Activated CD4-positive, alpha-beta T cell treated with anti-CD3 and anti-CD28 coated beads for 36 hours (primary cell): ENCODE measurements at regions of chr16 and their contacts with region 1.

Region 1: GRCh38 chr16:2155091-2156021 is at the start of gene TRAF7:
- DNase-seq: peak; percentile 98
- ATAC-seq: peak; percentile 95
- H3K4me3 Mint-ChIP-seq: peak within 1 kb of the TSS; percentile 89
- H3K27ac Mint-ChIP-seq: peak within 1 kb of the TSS; percentile 94
- H3K4me1 Mint-ChIP-seq: peaks cover 31% of the 10 kb centered on the region
- H3K27me3 Mint-ChIP-seq: no peaks in the 10 kb centered on the region
- total RNA-seq, gene TRAF7: 70.7 to 93.7 TPM

Region 2: GRCh38 chr16:1942810-1943726 is 212.3 kb before region 1 on chr16 and contains the start of gene MSRB1:
- CTCF ChIA-PET with region 1: no interaction called
- POLR2A ChIA-PET with region 1: interaction called, 5 read pairs
- intact Hi-C with region 1: loop called in 1 of 2 experiments (anchors 1 kb)
- DNase-seq: peak; percentile 100
- ATAC-seq: peak; percentile 97
- H3K4me3 Mint-ChIP-seq: peak within 1 kb of the TSS; percentile 80
- H3K27ac Mint-ChIP-seq: peak within 1 kb of the TSS; percentile 82
- H3K4me1 Mint-ChIP-seq: peaks cover 26% of the 10 kb centered on the region
- H3K27me3 Mint-ChIP-seq: no peaks in the 10 kb centered on the region
- total RNA-seq, gene MSRB1: 17.3 to 21.8 TPM

Region 3: GRCh38 chr16:1991948-1992703 is 163.2 kb before region 1 on chr16:
- CTCF ChIA-PET with region 1: interaction called, 7 read pairs
- POLR2A ChIA-PET with region 1: interaction called, 7 read pairs
- intact Hi-C with region 1: loop called in 1 of 2 experiments (anchors 1 kb)
- DNase-seq: peak; percentile 100
- ATAC-seq: peak; percentile 70
- H3K4me3 Mint-ChIP-seq: peak overlapping the region; percentile 56
- H3K27ac Mint-ChIP-seq: no peak overlapping the region
- H3K4me1 Mint-ChIP-seq: peaks cover 27% of the 10 kb centered on the region
- H3K27me3 Mint-ChIP-seq: peaks cover 15% of the 10 kb centered on the region

Region 4: DNA sequence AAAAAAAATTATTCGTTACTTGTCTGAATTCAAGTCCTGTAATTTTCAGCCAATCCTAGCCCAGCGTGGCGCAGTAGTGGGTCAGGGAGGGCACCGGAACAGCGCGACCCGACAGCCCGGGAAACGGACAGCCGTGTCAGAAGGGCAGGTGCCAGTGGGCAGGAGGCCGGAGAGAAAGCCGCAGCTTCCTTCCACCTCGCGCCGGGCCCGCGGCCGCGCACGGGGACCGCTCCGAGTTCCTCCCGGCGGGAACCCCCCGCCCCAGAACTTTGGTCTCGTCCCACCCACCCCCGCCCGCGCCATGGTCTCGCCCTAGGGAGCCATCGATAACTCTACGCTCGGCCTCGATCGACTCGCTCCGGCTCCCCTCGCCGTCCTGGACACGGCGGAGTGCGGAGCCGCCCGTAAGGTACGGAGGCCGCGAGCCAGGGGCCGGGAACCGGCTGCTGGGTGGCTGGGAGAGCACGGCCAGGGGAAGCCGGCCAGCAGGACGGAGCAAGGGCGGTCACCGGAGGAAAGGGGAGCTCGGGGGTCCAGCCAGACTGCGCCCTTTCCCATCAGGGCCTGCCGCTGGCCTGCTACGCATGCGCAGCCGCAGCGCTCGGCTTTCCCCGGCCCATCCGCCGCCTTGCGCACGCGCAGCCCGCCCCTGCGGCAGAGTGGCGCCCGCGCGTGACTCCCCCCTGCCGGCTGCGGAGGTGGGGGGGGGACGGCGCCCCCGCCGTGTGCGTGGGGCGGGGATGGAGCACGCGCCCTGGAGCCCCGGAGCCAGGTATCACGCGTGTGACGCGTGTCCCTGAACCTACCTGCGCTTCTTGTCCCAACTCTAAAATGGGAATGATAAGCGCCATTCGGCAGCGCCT is 50.0 kb after region 1 on chr16 and contains the start of gene MLST8:
- CTCF ChIA-PET with region 1: no interaction called
- POLR2A ChIA-PET with region 1: interaction called, 3 read pairs
- intact Hi-C with region 1: loop called (anchors 1 to 5 kb)
- DNase-seq: peak; percentile 92
- ATAC-seq: peak; percentile 84
- H3K4me3 Mint-ChIP-seq: peak within 1 kb of the TSS; percentile 83
- H3K27ac Mint-ChIP-seq: peak within 1 kb of the TSS; percentile 84
- H3K4me1 Mint-ChIP-seq: peaks cover 16% of the 10 kb centered on the region
- H3K27me3 Mint-ChIP-seq: no peaks in the 10 kb centered on the region
- total RNA-seq, gene MLST8: 61.3 to 76.1 TPM

Region 5: GRCh38 chr16:2429034-2429770 is 273.8 kb after region 1 on chr16 and contains the start of gene CCNF:
- CTCF ChIA-PET with region 1: no interaction called
- POLR2A ChIA-PET with region 1: no interaction called
- intact Hi-C with region 1: loop called in 1 of 2 experiments (anchors 1 kb)
- DNase-seq: peak; percentile 99
- ATAC-seq: peak; percentile 97
- H3K4me3 Mint-ChIP-seq: peak within 1 kb of the TSS; percentile 97
- H3K27ac Mint-ChIP-seq: peak within 1 kb of the TSS; percentile 76
- H3K4me1 Mint-ChIP-seq: peaks cover 16% of the 10 kb centered on the region
- H3K27me3 Mint-ChIP-seq: no peaks in the 10 kb centered on the region
- total RNA-seq, gene CCNF: 52.2 to 53.4 TPM

Region 6: GRCh38 chr16:2752035-2752849 is 596.9 kb after region 1 on chr16 and contains the start of gene SRRM2:
- CTCF ChIA-PET with region 1: interaction called, 3 read pairs
- POLR2A ChIA-PET with region 1: interaction called, 3 read pairs
- intact Hi-C with region 1: loop called in 1 of 2 experiments (anchors 1 kb)
- DNase-seq: peak; percentile 97
- ATAC-seq: peak; percentile 90
- H3K4me3 Mint-ChIP-seq: peak within 1 kb of the TSS; percentile 99
- H3K27ac Mint-ChIP-seq: peak within 1 kb of the TSS; percentile 98
- H3K4me1 Mint-ChIP-seq: peaks cover 45% of the 10 kb centered on the region
- H3K27me3 Mint-ChIP-seq: no peaks in the 10 kb centered on the region
- total RNA-seq, gene SRRM2: 517 to 598 TPM